Activated CD8-positive, alpha-beta T cell treated with anti-CD3 and anti-CD28 coated beads, Interleukin-2, amount 10 ng/mL, durations not matched to agents 7 days and 5 days (primary cell): ENCODE measurements at regions of chr3 and their contacts with region 1.

Region 1: GRCh38 chr3:138923531-138923994 is 23.4 kb downstream of the FOXL2 start:
- DNase-seq: peak; percentile 90
- ATAC-seq: peak; percentile 83
- H3K4me3 Mint-ChIP-seq: no peak overlapping the region
- H3K27ac Mint-ChIP-seq: no peak overlapping the region
- H3K4me1 Mint-ChIP-seq: no peaks in the 10 kb centered on the region
- H3K27me3 Mint-ChIP-seq: peaks cover 8% of the 10 kb centered on the region

Region 2: GRCh38 chr3:138479438-138479863 is 444.1 kb before region 1 on chr3:
- CTCF ChIA-PET with region 1: interaction called, 24 read pairs
- POLR2A ChIA-PET with region 1: no interaction called
- DNase-seq: peak; percentile 60
- ATAC-seq: peak; percentile 42
- H3K4me3 Mint-ChIP-seq: no peak overlapping the region
- H3K27ac Mint-ChIP-seq: no peak overlapping the region
- H3K4me1 Mint-ChIP-seq: no peaks in the 10 kb centered on the region
- H3K27me3 Mint-ChIP-seq: peaks cover 8% of the 10 kb centered on the region

Region 3: DNA sequence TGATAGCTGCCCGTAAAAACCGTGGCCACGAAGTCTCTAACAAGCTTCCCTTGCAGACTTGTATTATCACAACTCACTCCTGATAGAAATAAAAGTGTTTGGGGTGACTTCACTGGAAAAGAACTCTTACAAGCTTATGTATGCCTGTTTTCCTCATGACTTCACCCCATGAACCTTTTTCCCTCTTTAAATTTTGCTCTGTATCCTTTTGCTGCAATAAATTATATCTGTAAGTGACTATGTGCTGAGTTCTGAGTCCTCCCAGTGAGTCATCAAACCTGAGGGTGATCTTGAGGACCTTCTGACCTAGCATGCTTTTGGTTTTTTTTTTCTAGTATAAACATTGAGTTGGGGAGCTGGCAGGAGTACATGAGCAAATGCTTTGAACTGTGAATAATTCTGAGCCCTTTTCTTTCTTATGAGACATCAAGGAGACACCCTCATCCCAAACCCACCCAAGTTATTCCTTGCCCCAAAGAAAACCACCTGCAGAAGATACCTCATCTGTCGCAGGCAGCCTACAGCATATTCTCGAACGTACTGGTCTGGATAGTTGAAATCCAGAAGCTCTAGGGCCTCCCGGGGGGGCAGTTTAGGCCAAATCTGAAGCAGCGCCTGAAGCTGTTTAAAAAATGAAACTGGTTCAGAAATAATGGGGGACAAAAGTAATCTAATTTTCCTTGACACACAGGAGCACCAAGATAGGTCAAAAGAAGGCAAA is 229.1 kb before region 1 on chr3:
- CTCF ChIA-PET with region 1: interaction called, 39 read pairs
- POLR2A ChIA-PET with region 1: no interaction called
- DNase-seq: no peak
- ATAC-seq: no peak
- H3K4me3 Mint-ChIP-seq: no peak overlapping the region
- H3K27ac Mint-ChIP-seq: no peak overlapping the region
- H3K4me1 Mint-ChIP-seq: no peaks in the 10 kb centered on the region
- H3K27me3 Mint-ChIP-seq: no peaks in the 10 kb centered on the region

Region 4: GRCh38 chr3:138935848-138936740 is 12.5 kb after region 1 on chr3:
- CTCF ChIA-PET with region 1: interaction called, 56 read pairs
- POLR2A ChIA-PET with region 1: no interaction called
- DNase-seq: peak; percentile 65
- ATAC-seq: peak; percentile 78
- H3K4me3 Mint-ChIP-seq: peak overlapping the region; percentile 61
- H3K27ac Mint-ChIP-seq: no peak overlapping the region
- H3K4me1 Mint-ChIP-seq: peaks cover 33% of the 10 kb centered on the region
- H3K27me3 Mint-ChIP-seq: peaks cover 68% of the 10 kb centered on the region